ENCODE measurements at regions of chr18 and their contacts with region 1.

Region 1: GRCh38 chr18:58768293-58768974 is 96.2 kb upstream of the ZNF532 start:
- DNase-seq: peak; percentile 60 to 79 (median 77)
- H3K4me3 ChIP-seq: peak overlapping the region in 4 of 7 experiments; percentile 19 to 67 (median 44)
- H3K27ac ChIP-seq: no peak overlapping the region
- H3K4me1 ChIP-seq: peaks cover 0 to 18% (median 6%) of the 10 kb centered on the region in 4 experiments
- H3K27me3 ChIP-seq: peaks cover 3 to 18% (median 8%) of the 10 kb centered on the region in 5 experiments

Region 2: GRCh38 chr18:58781627-58782194 is 13.3 kb after region 1 on chr18:
- CTCF ChIA-PET with region 1: interaction called, 48 read pairs
- POLR2A ChIA-PET with region 1: no interaction called
- DNase-seq: peak; percentile 62 to 82 (median 79)
- H3K4me3 ChIP-seq: no peak overlapping the region
- H3K27ac ChIP-seq: no peak overlapping the region
- H3K4me1 ChIP-seq: no peaks in the 10 kb centered on the region
- H3K27me3 ChIP-seq: no peaks in the 10 kb centered on the region

Region 3: DNA sequence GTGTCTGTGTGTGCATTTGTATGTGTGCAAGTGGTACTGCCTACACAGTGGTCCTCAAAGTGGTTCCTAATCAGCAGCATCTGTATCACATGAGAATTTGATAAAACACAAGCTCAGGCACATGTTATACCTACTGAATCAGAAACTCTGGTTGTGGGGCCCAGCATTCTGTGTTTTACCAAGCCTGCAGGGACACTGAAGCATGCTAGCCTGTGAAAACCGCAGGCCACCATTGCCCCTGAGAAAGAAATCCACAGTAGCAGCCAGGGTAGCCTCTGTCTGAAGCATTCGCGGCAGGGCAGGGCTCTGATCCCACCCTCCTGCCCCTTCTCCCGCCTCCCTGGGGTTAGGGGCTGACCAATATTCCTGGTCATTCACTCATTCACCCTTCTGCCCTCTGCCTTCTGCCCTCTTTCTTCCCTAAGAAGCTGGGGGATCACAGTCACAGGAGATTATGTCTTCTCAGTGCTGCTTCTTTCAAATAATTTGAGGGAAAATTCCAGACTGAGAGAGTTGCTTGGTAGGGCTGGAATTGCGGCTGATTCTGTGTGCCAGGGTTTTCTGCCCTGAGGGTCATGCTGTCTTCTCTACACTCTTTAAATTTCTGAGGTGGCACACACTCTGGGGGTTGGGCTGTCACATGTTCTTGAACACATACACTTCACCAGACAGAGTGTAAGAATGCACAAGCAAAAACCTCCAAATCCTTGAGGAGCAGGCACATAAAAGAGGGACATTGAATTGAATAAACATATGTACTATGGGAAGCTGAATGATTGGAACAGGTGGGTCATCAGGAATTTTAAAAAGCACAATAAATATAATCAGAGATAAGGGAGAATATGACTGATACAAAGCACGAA is 244.6 kb after region 1 on chr18:
- CTCF ChIA-PET with region 1: no interaction called
- POLR2A ChIA-PET with region 1: no interaction called
- DNase-seq: no peak
- H3K4me3 ChIP-seq: no peak overlapping the region
- H3K27ac ChIP-seq: no peak overlapping the region
- H3K4me1 ChIP-seq: no peaks in the 10 kb centered on the region
- H3K27me3 ChIP-seq: no peaks in the 10 kb centered on the region

Region 4: GRCh38 chr18:59056706-59057492 is 288.5 kb after region 1 on chr18:
- CTCF ChIA-PET with region 1: interaction called, 65 read pairs
- POLR2A ChIA-PET with region 1: no interaction called
- DNase-seq: peak; percentile 63 to 79 (median 76)
- H3K4me3 ChIP-seq: no peak overlapping the region
- H3K27ac ChIP-seq: no peak overlapping the region
- H3K4me1 ChIP-seq: peaks cover 0 to 4% (median 0%) of the 10 kb centered on the region in 4 experiments
- H3K27me3 ChIP-seq: peaks cover 0 to 6% (median 0%) of the 10 kb centered on the region in 5 experiments

Region 5: DNA sequence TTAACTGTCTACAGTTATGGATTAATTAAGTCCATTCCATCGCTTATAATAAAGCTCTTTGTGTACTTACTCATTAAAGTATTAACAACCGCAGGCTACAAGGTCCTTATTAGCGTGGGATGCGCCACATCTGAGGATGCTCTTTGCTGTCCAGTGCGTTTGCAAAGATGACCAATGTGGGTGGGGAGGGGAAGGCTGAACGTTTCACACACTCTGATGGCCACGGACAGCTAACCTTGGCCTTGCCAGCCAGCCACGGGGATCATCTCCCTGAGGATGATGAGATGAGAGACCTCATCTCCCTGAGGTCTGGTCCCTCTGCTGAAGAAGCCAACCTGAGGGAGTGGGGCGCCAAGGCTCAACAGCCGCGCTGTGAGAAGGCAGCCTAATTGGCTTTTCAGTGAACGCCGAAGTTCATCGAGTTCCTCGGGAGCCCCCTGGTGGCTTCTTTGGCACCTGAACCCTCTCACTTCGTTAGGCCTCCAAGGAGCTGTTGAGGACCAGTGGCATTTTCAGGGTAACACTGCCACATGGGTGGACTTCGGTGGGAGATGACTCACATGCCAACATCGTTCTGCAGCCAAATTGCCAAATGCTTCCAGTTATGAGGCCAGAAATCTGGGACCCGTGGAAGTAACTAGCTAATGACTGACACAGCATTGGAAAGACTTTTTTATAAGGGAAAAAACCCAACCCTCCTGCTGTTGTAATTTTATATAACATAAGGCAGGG is 301.9 kb after region 1 on chr18:
- CTCF ChIA-PET with region 1: interaction called, 84 read pairs
- POLR2A ChIA-PET with region 1: no interaction called
- DNase-seq: peak; percentile 85 to 92 (median 89)
- H3K4me3 ChIP-seq: no peak overlapping the region
- H3K27ac ChIP-seq: no peak overlapping the region
- H3K4me1 ChIP-seq: no peaks in the 10 kb centered on the region
- H3K27me3 ChIP-seq: peaks cover 0 to 3% (median 0%) of the 10 kb centered on the region in 5 experiments

Measured in common myeloid progenitor, CD34-positive (primary cell).